Mammary epithelial cell (primary cell): ENCODE measurements at regions of chr2 and their contacts with region 1.

Region 1: GRCh38 chr2:131673392-131674173 is 145.9 kb downstream of the CCDC74A start:
- DNase-seq: peak; percentile 60
- H3K4me3 ChIP-seq: peak overlapping the region; percentile 1 to 40 (median 38)
- H3K27ac ChIP-seq: no peak overlapping the region
- H3K4me1 ChIP-seq: peaks cover 34% of the 10 kb centered on the region
- H3K27me3 ChIP-seq: no peaks in the 10 kb centered on the region
- CTCF ChIP-seq: peak; percentile 70 to 81

Region 2: GRCh38 chr2:131154071-131154531 is 519.5 kb before region 1 on chr2:
- CTCF ChIA-PET with region 1: interaction called, 10 read pairs
- dilution Hi-C with region 1: no loop called
- in situ Hi-C with region 1: no loop called
- intact Hi-C with region 1: loop called (anchors 1 kb)
- DNase-seq: peak; percentile 46
- H3K4me3 ChIP-seq: no peak overlapping the region
- H3K27ac ChIP-seq: no peak overlapping the region
- H3K4me1 ChIP-seq: no peaks in the 10 kb centered on the region
- H3K27me3 ChIP-seq: no peaks in the 10 kb centered on the region
- CTCF ChIP-seq: peak; percentile 77 to 91

Region 3: GRCh38 chr2:131413148-131413747 is 260.3 kb before region 1 on chr2:
- CTCF ChIA-PET with region 1: interaction called, 18 read pairs
- dilution Hi-C with region 1: no loop called
- in situ Hi-C with region 1: loop called (anchors 25 kb)
- intact Hi-C with region 1: loop called (anchors 1 kb)
- DNase-seq: peak; percentile 17
- H3K4me3 ChIP-seq: no peak overlapping the region
- H3K27ac ChIP-seq: no peak overlapping the region
- H3K4me1 ChIP-seq: no peaks in the 10 kb centered on the region
- H3K27me3 ChIP-seq: peaks cover 3% of the 10 kb centered on the region
- CTCF ChIP-seq: peak; percentile 64 to 76

Region 4: GRCh38 chr2:131475831-131476230 is 197.8 kb before region 1 on chr2 and contains the start of gene TUBA3D:
- CTCF ChIA-PET with region 1: no interaction called
- dilution Hi-C with region 1: no loop called
- in situ Hi-C with region 1: no loop called
- intact Hi-C with region 1: no loop called
- DNase-seq: no peak
- H3K4me3 ChIP-seq: no peak within 1 kb of the TSS
- H3K27ac ChIP-seq: no peak within 1 kb of the TSS
- H3K4me1 ChIP-seq: no peaks in the 10 kb centered on the region
- H3K27me3 ChIP-seq: no peaks in the 10 kb centered on the region
- CTCF ChIP-seq: no peak
- total RNA-seq, gene TUBA3D: not detected

Region 5: GRCh38 chr2:131492418-131493198 is 181.0 kb before region 1 on chr2:
- CTCF ChIA-PET with region 1: interaction called, 3 read pairs
- dilution Hi-C with region 1: no loop called
- in situ Hi-C with region 1: no loop called
- intact Hi-C with region 1: loop called (anchors 1 kb)
- DNase-seq: peak; percentile 98
- H3K4me3 ChIP-seq: peak overlapping the region; percentile 64 to 95 (median 78)
- H3K27ac ChIP-seq: peak overlapping the region; percentile 89
- H3K4me1 ChIP-seq: peaks cover 9% of the 10 kb centered on the region
- H3K27me3 ChIP-seq: no peaks in the 10 kb centered on the region
- CTCF ChIP-seq: peak; percentile 33 to 74

Region 6: DNA sequence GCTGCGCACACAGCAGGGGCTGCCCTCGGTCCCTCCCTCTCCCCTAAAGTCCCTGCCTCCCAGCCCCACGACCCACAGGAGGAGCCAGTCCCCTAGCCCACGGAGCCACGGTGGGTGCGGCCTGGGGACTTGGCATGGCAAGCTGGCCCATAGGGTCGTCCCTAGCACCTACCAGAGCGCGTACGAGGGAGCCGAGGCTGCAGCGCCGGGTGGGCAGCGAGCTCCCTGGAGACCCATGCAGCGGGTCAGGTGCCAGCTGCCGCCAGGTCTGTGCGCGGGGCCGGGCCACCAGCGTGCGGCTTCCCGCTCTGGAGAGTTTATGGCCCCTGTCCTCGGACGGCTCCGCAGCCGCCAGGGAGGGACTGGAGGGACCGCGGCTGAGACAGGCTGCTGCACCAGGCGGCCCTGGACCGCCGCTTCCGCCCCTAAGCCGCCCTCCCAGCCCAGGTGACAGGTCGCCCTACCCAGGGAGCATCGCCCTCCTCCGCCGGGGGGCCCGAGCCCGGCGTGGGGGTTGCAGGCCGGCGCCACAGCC is 127.7 kb after region 1 on chr2:
- CTCF ChIA-PET with region 1: interaction called, 9 read pairs
- dilution Hi-C with region 1: no loop called
- in situ Hi-C with region 1: no loop called
- intact Hi-C with region 1: loop called (anchors 1 kb)
- DNase-seq: no peak
- H3K4me3 ChIP-seq: no peak overlapping the region
- H3K27ac ChIP-seq: no peak overlapping the region
- H3K4me1 ChIP-seq: no peaks in the 10 kb centered on the region
- H3K27me3 ChIP-seq: no peaks in the 10 kb centered on the region
- CTCF ChIP-seq: no peak

Region 7: DNA sequence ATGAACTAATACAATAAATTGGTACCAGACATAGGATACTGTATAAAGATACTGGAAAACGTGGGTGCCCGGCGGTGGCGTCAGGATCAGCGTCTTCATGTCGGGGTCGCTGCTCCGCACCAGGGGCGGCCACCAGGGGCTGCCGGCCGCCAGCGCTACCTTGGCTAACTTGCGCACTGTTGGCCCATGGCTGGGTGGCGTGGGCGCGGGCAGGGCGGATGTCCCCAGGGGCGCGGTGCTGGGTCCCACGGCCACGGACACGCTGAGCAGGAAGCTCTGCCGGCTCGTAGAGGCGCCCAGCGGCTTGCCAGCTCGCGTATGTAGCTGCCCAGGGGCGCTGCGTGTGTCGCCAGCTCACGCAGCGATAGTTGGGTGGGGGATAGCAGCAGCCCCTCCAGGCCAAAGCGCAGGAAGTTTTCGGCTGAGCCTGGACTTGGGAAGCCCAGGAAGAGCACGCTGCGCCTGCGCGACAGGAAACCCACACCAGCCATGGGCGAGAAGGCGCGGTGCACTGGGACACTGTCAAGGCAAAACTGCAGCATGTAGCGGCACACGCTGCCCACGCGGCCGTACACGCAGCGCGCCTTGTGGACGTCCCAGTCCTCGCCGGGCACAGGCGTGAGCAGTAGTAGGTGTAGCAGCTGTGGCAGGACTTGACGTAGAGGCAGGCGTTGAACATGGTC is 154.0 kb after region 1 on chr2:
- CTCF ChIA-PET with region 1: no interaction called
- dilution Hi-C with region 1: no loop called
- in situ Hi-C with region 1: no loop called
- intact Hi-C with region 1: loop called (anchors 1 kb)
- DNase-seq: no peak
- H3K4me3 ChIP-seq: no peak overlapping the region
- H3K27ac ChIP-seq: no peak overlapping the region
- H3K4me1 ChIP-seq: no peaks in the 10 kb centered on the region
- H3K27me3 ChIP-seq: no peaks in the 10 kb centered on the region
- CTCF ChIP-seq: no peak